RWPE1 (cell line): ENCODE measurements at regions of chr4 and their contacts with region 1.

Region 1: GRCh38 chr4:8176547-8177399 is 18.2 kb upstream of the ABLIM2 start:
- DNase-seq: peak; percentile 53
- H3K27ac ChIP-seq: no peak overlapping the region
- CTCF ChIP-seq: peak; percentile 98

Region 2: GRCh38 chr4:8192748-8193738 is 16.3 kb after region 1 on chr4:
- CTCF ChIA-PET with region 1: interaction called, 46 read pairs
- POLR2A ChIA-PET with region 1: interaction called, 3 read pairs
- DNase-seq: peak; percentile 33
- H3K27ac ChIP-seq: peak overlapping the region; percentile 97
- CTCF ChIP-seq: no peak; the same call in 1 of the 2 replicates

Region 3: GRCh38 chr4:8198906-8199593 is 22.3 kb after region 1 on chr4 and contains the start of gene SH3TC1:
- CTCF ChIA-PET with region 1: interaction called, 46 read pairs
- POLR2A ChIA-PET with region 1: no interaction called
- DNase-seq: peak; percentile 91
- H3K27ac ChIP-seq: peak within 1 kb of the TSS; percentile 96
- CTCF ChIP-seq: no peak

Region 4: DNA sequence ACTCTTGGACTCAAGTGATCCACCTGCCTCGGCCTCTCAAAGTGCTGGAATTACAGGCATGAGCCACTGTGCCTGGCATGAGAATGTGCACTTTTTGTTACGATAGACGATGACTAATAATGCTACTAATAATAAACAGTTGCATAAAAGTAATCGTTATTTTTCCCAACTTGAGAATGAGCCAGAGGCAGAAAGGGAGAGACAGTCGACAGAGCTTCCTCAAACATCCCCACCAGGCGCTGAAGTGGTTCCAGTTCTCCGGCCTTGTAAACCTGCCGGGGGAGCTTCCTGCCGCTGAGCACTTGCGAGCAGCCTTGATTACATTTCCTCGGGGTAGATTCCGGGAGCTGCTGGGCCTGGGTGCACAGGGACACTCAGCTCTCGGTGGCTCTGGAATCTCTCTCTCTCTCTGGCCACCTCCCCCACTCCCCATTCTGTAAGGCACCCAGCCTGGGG is 83.9 kb after region 1 on chr4:
- CTCF ChIA-PET with region 1: no interaction called
- POLR2A ChIA-PET with region 1: no interaction called
- DNase-seq: no peak
- H3K27ac ChIP-seq: peak overlapping the region; percentile 30
- CTCF ChIP-seq: no peak

Region 5: DNA sequence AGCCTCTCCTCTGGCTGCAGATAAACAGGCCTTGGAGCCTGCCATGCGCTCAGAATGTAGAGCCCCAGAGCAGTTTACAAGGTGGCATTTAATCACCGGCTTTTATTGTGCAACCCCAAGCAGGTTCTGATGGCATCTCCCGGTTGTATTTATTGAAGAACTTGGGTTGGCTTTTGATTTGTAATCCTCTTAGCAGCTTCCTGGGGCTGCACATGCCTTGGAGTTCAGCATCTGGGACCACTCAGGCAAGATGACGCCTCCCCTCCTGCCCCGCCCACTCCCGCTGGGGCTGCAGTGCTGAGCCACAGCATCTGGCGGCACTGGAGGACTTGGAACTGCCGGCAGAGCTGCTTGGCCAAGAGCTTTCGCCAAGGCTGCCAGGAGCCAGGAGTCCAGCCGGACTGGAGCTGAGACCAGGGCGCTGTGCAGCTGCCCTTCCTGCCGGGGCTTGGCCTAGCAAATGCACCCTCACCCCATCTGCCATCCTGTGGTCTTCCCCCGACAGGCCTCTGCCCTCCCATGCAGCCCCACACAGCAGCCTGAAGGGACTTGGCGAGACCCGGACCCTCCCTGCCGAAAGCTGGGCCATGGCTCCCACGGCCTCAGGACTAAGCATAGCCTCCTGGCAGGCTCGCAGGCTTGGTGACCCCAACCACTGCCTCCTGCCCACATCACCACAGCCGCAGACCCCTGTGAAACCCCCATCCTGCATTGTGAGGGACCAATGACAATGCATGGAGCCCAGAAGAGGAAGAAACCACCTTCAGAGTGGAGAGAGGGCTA is 98.2 kb after region 1 on chr4:
- CTCF ChIA-PET with region 1: no interaction called
- POLR2A ChIA-PET with region 1: no interaction called
- DNase-seq: no peak
- H3K27ac ChIP-seq: no peak overlapping the region
- CTCF ChIP-seq: no peak

Region 6: GRCh38 chr4:8940792-8941491 is 764.2 kb after region 1 on chr4:
- CTCF ChIA-PET with region 1: no interaction called
- POLR2A ChIA-PET with region 1: no interaction called
- DNase-seq: no peak
- H3K27ac ChIP-seq: no peak overlapping the region
- CTCF ChIP-seq: peak; percentile 27